Activated CD4-positive, alpha-beta T cell treated with anti-CD3 and anti-CD28 coated beads, Interleukin-2, amount 10 ng/mL, durations not matched to agents 24 days and 14 days (primary cell): ENCODE measurements at regions of chr5 and their contacts with region 1.

Region 1: GRCh38 chr5:1344975-1345838 is at the start of gene CLPTM1L:
- DNase-seq: peak; percentile 97
- H3K4me3 Mint-ChIP-seq: peak within 1 kb of the TSS; percentile 92
- H3K27ac Mint-ChIP-seq: peak within 1 kb of the TSS; percentile 93
- H3K4me1 Mint-ChIP-seq: peaks cover 22% of the 10 kb centered on the region
- H3K27me3 Mint-ChIP-seq: no peaks in the 10 kb centered on the region
- total RNA-seq, gene CLPTM1L: 113 and 114 TPM in 2 replicates

Region 2: DNA sequence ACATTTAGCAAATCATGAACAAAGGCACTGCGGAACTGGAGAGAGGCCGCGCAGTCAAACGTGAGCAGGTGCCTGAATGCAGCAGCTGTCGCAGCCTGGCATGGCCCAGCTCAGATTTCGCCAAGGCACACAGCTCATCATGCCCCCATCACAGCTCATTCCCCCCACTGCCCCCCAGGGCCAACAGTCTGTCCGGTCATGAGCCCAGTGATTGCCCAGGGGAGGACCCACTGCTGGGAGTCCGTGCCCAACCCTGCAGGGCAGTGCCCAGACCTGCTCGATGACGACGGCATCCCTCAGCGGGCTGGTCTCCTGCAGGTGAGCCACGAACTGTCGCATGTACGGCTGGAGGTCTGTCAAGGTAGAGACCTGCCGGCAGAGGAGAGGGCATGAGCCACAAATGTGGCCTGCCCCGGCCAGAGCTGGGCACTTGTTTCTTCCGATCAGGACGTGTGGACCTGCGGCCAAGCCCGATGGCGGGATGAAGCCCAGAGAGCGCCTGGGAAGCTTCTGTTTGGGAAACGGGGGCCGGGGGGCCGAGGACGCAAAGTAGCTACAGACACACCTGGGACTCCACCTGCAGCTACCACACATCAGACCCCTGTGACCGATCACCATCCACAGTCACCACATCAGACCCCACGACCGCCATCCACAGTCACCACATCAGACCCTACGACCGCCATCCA is 73.2 kb before region 1 on chr5:
- intact Hi-C with region 1: no loop called
- DNase-seq: no peak
- H3K4me3 Mint-ChIP-seq: no peak overlapping the region
- H3K27ac Mint-ChIP-seq: no peak overlapping the region
- H3K4me1 Mint-ChIP-seq: peaks cover 12% of the 10 kb centered on the region
- H3K27me3 Mint-ChIP-seq: peaks cover 4% of the 10 kb centered on the region

Region 3: DNA sequence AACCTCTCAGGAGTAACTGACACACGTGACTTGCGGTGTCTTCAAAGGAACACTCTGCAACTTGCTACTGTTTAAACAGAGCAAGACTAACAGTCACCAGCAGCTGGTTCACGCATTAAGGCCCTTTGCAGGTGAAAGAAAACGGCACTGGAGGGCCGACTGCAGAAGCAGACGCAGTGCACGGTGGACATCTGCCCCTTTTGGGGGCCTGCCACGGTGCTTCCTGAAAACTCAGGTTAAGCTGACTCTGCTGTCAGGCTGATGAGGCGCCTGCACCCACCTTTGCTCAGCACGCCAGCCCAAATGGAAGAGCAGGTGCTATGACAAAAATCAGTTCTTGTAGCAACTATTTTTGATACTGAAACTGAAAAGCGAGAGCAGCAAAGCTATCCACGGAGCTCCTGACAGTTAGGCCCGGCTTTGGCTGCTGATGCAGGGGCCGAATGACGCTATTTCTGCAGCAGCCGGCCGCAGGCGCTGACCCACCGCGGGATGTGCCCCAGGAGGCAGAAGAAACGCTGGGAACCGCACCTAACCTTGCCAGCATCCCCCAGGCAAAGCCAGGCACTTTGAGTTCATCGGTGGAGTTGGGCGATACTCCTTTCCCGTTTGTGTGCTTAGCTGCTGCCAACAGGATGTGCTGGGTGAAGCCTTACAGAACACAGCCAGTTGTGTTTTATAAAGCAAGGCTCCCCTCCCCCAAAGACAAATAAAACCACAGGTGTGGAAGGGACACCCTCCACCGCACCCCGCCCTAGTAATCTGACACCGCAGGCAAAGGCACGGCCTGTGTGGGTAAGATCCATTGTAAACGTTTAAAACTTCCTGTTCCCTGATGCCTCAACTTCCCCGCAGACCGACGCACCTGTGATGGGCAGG is 29.3 kb before region 1 on chr5:
- intact Hi-C with region 1: loop called (anchors 2 kb)
- DNase-seq: peak; percentile 90
- H3K4me3 Mint-ChIP-seq: peak overlapping the region; percentile 74
- H3K27ac Mint-ChIP-seq: peak overlapping the region; percentile 85
- H3K4me1 Mint-ChIP-seq: peaks cover 57% of the 10 kb centered on the region
- H3K27me3 Mint-ChIP-seq: no peaks in the 10 kb centered on the region

Region 4: DNA sequence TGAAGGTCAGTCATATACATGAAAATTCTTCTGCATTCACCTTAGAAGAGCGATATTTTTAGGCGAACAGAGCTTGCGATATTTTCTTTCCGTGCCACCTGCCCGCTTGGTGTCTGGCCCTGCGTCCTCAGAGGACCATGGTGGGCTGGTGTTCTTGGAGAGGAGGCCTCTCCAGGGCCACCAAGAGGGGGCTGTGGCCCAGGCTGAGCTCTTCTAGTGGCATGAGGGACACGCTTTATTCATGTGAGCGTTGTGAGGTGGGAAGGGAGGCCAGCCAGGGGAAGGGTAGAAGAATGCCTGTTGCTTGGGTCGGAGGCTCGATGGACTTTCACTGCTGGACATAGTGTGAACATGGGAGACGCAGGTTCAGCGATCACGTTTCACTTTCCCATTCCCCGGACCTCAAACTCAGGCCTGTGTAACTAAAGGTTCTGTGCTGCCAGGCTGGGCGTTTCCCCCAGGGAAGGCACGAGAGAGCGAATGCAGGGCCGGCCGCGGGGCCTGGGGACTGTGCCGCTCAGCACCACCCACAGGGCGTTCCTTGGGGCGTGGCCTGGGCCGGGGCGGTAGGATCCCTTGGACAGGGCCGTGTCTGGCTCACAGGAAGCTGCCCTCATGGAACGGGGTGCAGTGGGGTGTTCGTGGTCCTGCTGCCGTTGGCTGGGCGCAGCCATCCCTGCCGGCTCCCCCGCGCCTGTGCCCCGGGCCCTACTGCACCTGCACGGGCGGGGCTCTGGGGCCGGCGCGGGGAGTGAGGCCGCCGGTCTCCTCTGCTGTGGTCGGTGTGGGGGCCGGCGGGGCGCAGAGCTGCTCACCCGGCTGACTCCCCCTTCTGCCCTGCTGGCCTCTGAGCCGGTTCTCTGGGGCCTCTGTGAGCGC is 40.4 kb after region 1 on chr5:
- intact Hi-C with region 1: loop called (anchors 2 kb)
- DNase-seq: peak; percentile 97
- H3K4me3 Mint-ChIP-seq: peak overlapping the region; percentile 97
- H3K27ac Mint-ChIP-seq: peak overlapping the region; percentile 97
- H3K4me1 Mint-ChIP-seq: peaks cover 14% of the 10 kb centered on the region
- H3K27me3 Mint-ChIP-seq: peaks cover 21% of the 10 kb centered on the region

Region 5: DNA sequence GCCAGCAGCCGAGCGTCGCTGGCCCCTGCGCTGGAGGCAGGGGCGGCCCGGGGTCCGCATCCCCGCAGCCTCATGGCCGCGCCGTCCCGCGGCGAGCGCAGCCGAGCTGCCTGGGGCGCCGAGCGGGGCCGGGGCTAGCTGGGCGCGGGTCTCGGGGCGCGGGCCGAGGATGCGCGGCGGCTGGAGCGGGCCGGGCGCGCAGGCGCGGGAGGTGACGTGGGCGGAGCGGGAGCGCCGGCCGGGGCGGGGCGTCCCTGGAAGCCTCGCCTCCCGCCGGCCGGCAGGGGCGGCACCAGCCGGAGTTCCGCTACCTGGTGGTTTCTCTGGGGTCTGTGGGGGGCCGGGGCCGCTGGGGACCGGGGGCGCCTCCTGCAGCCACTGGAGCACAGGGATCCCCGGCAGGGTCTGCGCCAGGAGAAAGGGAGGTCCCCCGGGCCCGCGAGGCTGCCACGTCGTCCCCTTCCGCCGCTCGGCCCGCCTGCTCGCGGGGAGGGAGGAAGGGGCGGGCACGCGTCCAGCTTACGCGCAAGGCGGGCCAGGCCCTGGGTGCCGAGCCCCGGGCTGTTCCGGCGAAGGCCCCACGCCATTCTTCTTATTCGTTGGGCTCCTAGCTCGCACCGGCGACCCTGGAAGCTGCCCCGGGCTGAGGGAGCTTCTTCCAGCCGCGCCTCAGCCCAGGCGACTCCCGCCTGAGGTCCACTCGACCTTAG is 178.7 kb after region 1 on chr5 and contains the start of gene LPCAT1:
- intact Hi-C with region 1: loop called (anchors 10 kb)
- DNase-seq: peak; percentile 95
- H3K4me3 Mint-ChIP-seq: peak within 1 kb of the TSS; percentile 89
- H3K27ac Mint-ChIP-seq: peak within 1 kb of the TSS; percentile 70
- H3K4me1 Mint-ChIP-seq: peaks cover 18% of the 10 kb centered on the region
- H3K27me3 Mint-ChIP-seq: peaks cover 5% of the 10 kb centered on the region
- total RNA-seq, gene LPCAT1: 93.2 and 95.6 TPM in 2 replicates

Region 6: DNA sequence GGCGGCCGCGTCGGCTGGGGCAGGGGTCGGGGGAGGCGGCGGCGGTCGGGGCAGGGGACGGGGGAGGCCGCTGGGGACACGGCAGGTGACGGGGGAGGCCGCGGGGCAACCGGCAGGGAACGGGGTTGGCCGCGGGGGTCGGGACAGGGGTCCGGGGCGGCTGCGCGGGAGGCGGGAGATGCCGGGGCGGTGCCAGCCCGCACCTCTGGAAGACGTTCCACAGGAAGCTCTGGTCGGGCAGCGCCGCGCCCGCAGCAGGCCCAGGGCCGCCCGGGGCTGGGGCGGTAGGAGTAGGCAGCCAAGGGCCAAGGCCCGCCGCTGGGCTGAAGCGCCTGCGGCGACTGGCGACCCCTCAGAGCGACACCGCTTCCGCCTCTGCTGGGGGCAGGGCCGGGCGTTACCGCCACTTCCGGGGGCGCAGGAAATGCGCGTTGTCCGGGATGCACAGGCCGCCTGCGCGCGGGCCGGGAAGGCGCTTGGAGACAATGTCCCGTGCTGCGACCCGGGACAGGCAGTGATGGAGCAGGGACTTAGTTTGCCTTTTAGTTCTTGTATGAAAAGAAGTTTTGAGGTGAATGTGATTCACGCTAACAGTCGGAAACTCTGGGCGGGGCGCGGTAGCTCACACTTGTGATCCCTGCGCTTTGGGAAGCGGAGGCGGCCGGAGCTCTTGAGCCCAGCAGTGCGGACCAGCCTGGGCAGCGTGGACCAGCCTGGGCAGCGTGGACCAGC is 288.6 kb after region 1 on chr5:
- intact Hi-C with region 1: loop called (anchors 5 kb)
- DNase-seq: peak; percentile 95
- H3K4me3 Mint-ChIP-seq: peak overlapping the region; percentile 94
- H3K27ac Mint-ChIP-seq: peak overlapping the region; percentile 96
- H3K4me1 Mint-ChIP-seq: peaks cover 32% of the 10 kb centered on the region
- H3K27me3 Mint-ChIP-seq: peaks cover 2% of the 10 kb centered on the region

Region 7: DNA sequence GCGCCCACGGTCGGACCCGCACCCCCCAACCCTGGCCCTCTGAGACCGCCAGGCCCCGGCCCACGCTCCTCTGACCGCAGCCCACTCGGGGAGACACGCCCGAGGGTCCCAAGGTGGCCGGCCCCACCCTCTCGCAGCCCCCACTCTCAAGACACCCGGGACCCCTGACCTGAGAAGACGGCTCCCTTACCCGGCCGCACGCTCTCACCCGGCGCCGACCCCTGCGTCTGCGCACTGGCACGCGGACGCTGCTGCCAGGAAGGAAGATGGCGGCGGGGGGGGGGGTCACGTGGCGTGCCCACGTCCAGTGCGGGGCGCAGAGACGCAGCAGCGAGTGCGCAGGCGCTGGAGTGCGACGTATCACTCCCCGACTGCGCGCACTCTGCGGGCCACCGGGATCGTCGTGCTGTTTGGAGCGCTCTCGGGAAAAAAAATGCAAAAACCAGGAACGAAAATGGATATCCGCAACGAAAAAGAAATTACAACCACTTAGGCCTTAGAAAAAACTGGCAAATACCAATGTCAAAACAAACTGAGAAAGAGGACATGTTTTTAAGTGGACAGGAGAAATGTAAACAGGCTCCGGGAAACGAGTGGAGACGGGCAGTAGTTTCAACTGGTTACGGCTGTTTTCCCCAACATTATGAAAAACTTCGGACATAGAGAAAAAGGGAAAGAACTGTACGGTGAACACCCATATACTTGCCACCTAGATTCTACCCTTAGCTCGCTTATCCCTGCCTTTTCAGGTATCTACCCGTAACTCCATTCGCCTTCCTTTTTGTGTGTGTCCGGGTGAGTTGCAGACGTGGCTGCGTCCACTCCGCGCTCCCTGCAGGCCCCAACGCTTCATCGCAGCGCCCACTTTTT is 454.6 kb after region 1 on chr5 and contains the start of gene MRPL36:
- intact Hi-C with region 1: loop called (anchors 2 kb)
- DNase-seq: peak; percentile 97
- H3K4me3 Mint-ChIP-seq: peak within 1 kb of the TSS; percentile 90
- H3K27ac Mint-ChIP-seq: peak within 1 kb of the TSS; percentile 93
- H3K4me1 Mint-ChIP-seq: peaks cover 49% of the 10 kb centered on the region
- H3K27me3 Mint-ChIP-seq: no peaks in the 10 kb centered on the region
- total RNA-seq, gene MRPL36: 107 and 108 TPM in 2 replicates